Endothelial cell of umbilical vein (primary cell): ENCODE measurements at regions of chr4 and their contacts with region 1.

Region 1: DNA sequence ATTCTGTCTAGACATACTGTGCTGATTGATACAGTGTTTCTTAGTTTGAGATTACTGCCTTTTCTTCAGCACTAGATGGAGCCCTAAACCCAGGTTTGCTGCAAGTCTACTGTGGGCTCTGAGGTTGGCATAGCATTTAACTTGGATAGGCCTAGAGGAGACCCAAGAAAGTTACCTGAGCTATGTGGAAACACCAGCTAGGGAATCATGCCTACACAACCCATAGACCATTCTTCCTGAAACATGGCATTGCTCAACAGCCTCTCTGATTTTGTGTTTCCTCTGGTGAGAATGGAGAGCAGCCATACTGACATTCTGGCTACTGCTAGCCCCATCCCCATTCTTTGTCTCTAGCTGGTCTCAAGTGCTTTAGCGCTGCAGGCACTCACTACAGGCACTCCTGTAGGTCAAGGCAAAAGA is 287.7 kb upstream of the PCDH18 start:
- DNase-seq: peak; percentile 61
- H3K4me3 ChIP-seq: no peak overlapping the region
- H3K27ac ChIP-seq: no peak overlapping the region
- H3K4me1 ChIP-seq: peaks cover 3% of the 10 kb centered on the region
- H3K27me3 ChIP-seq: no peaks in the 10 kb centered on the region
- CTCF ChIP-seq: peak; percentile 46 to 57
- POLR2A ChIP-seq: no peak

Region 2: DNA sequence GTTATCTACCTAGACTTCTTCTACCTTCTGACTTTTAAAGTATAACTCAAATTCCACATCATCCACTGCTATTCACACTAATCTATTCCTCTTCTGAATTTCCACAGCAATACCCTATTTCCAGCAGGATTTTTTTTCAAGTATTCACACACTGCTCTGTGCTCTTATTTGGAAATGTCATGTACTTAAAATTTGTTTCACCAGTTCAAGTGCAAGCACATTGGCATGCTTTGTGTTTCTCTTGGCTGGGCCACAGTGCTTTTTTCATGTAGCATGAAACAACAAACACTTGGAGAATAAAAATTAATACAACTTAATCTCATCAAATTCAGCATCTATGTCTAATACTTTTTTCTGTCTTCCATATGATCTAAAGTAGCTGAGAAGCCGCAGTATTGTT is 125.8 kb before region 1 on chr4:
- CTCF ChIA-PET with region 1: no interaction called
- POLR2A ChIA-PET with region 1: no interaction called
- dilution Hi-C with region 1: no loop called
- intact Hi-C with region 1: no loop called
- DNase-seq: peak; percentile 10
- H3K4me3 ChIP-seq: no peak overlapping the region
- H3K27ac ChIP-seq: no peak overlapping the region
- H3K4me1 ChIP-seq: no peaks in the 10 kb centered on the region
- H3K27me3 ChIP-seq: no peaks in the 10 kb centered on the region
- CTCF ChIP-seq: no peak
- POLR2A ChIP-seq: no peak

Region 3: DNA sequence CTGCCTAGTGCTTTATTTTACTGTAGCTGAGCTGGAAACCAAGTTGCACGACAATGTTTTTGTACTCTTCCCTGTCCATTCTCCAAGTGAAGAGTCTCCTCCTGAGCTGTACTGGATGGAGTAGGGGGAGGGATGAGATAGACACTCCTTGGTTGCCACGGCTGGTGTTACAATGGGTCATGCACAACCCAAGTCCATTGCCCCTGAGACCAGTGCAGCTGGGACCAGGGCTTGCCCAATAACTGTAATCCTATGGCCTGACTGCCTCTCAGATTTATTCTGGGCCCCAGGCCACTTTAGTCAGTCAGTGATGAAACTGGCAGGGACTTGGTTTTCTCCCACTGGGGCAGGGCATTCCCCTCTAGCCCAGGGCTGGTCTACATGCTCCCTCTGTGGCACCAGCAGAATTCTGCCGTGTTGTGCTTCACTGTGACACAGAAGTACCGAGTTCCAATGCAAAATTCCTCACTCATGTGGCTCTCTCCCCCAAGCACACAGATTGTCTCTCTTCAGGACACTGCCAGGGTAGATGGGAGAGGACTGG is 84.3 kb before region 1 on chr4:
- CTCF ChIA-PET with region 1: interaction called, 4 read pairs
- POLR2A ChIA-PET with region 1: no interaction called
- dilution Hi-C with region 1: no loop called
- intact Hi-C with region 1: loop called (anchors 5 kb)
- DNase-seq: no peak
- H3K4me3 ChIP-seq: no peak overlapping the region
- H3K27ac ChIP-seq: no peak overlapping the region
- H3K4me1 ChIP-seq: no peaks in the 10 kb centered on the region
- H3K27me3 ChIP-seq: no peaks in the 10 kb centered on the region
- CTCF ChIP-seq: no peak
- POLR2A ChIP-seq: no peak

Region 4: GRCh38 chr4:137861682-137862081 is 41.7 kb after region 1 on chr4:
- CTCF ChIA-PET with region 1: interaction called, 24 read pairs
- POLR2A ChIA-PET with region 1: no interaction called
- dilution Hi-C with region 1: no loop called
- intact Hi-C with region 1: loop called (anchors 1 kb)
- DNase-seq: peak; percentile 32
- H3K4me3 ChIP-seq: no peak overlapping the region
- H3K27ac ChIP-seq: no peak overlapping the region
- H3K4me1 ChIP-seq: no peaks in the 10 kb centered on the region
- H3K27me3 ChIP-seq: no peaks in the 10 kb centered on the region
- CTCF ChIP-seq: peak; percentile 11 to 18
- POLR2A ChIP-seq: no peak

Region 5: DNA sequence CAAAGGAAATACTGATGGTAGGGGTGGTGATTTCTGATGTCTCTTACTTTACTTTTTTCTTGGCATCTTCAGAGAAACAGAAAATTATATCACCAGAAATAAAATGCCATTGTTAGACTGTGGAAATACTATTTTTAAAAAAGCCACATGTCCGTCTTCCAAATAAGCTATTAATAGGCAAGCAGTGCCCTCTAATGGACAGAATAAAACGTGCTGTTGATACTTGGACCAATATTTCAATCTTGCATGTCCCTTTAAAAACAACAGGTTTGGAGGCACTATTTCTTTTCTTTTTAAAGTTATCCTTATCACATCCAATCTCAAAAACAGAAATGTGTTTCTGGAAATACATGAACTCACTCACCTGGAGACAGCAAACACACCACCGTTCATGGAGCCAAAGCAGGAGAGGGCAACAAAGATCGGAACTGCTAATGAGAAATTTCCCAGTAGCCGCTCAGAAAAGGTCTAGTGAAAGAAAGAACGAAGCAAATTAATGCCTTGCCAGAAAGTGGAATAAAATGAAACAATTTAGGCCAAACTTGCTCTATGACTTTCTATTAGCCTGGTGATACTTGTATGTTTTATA is 363.0 kb after region 1 on chr4:
- CTCF ChIA-PET with region 1: interaction called, 55 read pairs
- POLR2A ChIA-PET with region 1: no interaction called
- dilution Hi-C with region 1: no loop called
- intact Hi-C with region 1: loop called (anchors 1 kb)
- DNase-seq: peak; percentile 85
- H3K4me3 ChIP-seq: no peak overlapping the region
- H3K27ac ChIP-seq: no peak overlapping the region
- H3K4me1 ChIP-seq: peaks cover 14% of the 10 kb centered on the region
- H3K27me3 ChIP-seq: no peaks in the 10 kb centered on the region
- CTCF ChIP-seq: peak; percentile 43 to 48
- POLR2A ChIP-seq: no peak

Region 6: GRCh38 chr4:138576684-138577083 is 756.7 kb after region 1 on chr4:
- CTCF ChIA-PET with region 1: interaction called, 48 read pairs
- POLR2A ChIA-PET with region 1: no interaction called
- dilution Hi-C with region 1: no loop called
- intact Hi-C with region 1: loop called (anchors 1 kb)
- DNase-seq: peak; percentile 57
- H3K4me3 ChIP-seq: no peak overlapping the region
- H3K27ac ChIP-seq: no peak overlapping the region
- H3K4me1 ChIP-seq: no peaks in the 10 kb centered on the region
- H3K27me3 ChIP-seq: peaks cover under 1 to 3% of the 10 kb centered on the region in 2 experiments
- CTCF ChIP-seq: peak; percentile 31 to 53
- POLR2A ChIP-seq: no peak

Region 7: GRCh38 chr4:138919094-138919936 is 1099.3 kb after region 1 on chr4:
- CTCF ChIA-PET with region 1: interaction called, 4 read pairs
- POLR2A ChIA-PET with region 1: no interaction called
- dilution Hi-C with region 1: no loop called
- intact Hi-C with region 1: loop called (anchors 1 kb)
- DNase-seq: peak; percentile 74
- H3K4me3 ChIP-seq: no peak overlapping the region
- H3K27ac ChIP-seq: no peak overlapping the region
- H3K4me1 ChIP-seq: no peaks in the 10 kb centered on the region
- H3K27me3 ChIP-seq: no peaks in the 10 kb centered on the region
- CTCF ChIP-seq: peak; percentile 72 to 75
- POLR2A ChIP-seq: no peak